ENCODE measurements at regions of chr12 and their contacts with region 1.

Region 1: GRCh38 chr12:121443193-121443870 is 43.4 kb downstream of the RNF34 start:
- DNase-seq: peak; percentile 62 to 80
- ATAC-seq: peak; percentile 82 to 93
- H3K4me3 ChIP-seq: no peak overlapping the region
- H3K27ac ChIP-seq: peak overlapping the region in 3 of 4 donors; percentile 14 to 29 (median 23)
- H3K4me1 ChIP-seq: peaks cover 0 to 5% of the 10 kb centered on the region in 2 donors
- H3K27me3 ChIP-seq: no peaks in the 10 kb centered on the region
- CTCF ChIP-seq: peak; percentile 85 to 97 (median 94)
- POLR2A ChIP-seq: no peak

Region 2: GRCh38 chr12:121209624-121210572 is 233.4 kb before region 1 on chr12 and contains the start of gene P2RX4:
- in situ Hi-C with region 1: no loop called
- intact Hi-C with region 1: no loop called
- DNase-seq: peak; percentile 38 to 63
- ATAC-seq: peak; percentile 67 to 75
- H3K4me3 ChIP-seq: peak within 1 kb of the TSS; percentile 60 to 74 (median 71)
- H3K27ac ChIP-seq: peak within 1 kb of the TSS; percentile 65 to 80 (median 74)
- H3K4me1 ChIP-seq: peaks cover 0 to 8% of the 10 kb centered on the region in 2 donors
- H3K27me3 ChIP-seq: no peaks in the 10 kb centered on the region
- CTCF ChIP-seq: no peak
- POLR2A ChIP-seq: peak; percentile 60 to 68
- total RNA-seq, gene P2RX4: 3.9 to 7.9 (median 6.1) TPM

Region 3: GRCh38 chr12:121334513-121335343 is 108.6 kb before region 1 on chr12:
- in situ Hi-C with region 1: loop called (anchors 5 to 10 kb)
- intact Hi-C with region 1: loop called (anchors 1 kb)
- DNase-seq: no peak
- ATAC-seq: peak; percentile 98 to 99
- H3K4me3 ChIP-seq: no peak overlapping the region
- H3K27ac ChIP-seq: no peak overlapping the region
- H3K4me1 ChIP-seq: no peaks in the 10 kb centered on the region
- H3K27me3 ChIP-seq: no peaks in the 10 kb centered on the region
- CTCF ChIP-seq: peak; percentile 77 to 92 (median 85)
- POLR2A ChIP-seq: no peak

Region 4: GRCh38 chr12:121663610-121663929 is 220.2 kb after region 1 on chr12:
- in situ Hi-C with region 1: no loop called
- intact Hi-C with region 1: no loop called
- DNase-seq: no peak
- ATAC-seq: no peak
- H3K4me3 ChIP-seq: no peak overlapping the region
- H3K27ac ChIP-seq: no peak overlapping the region
- H3K4me1 ChIP-seq: no peaks in the 10 kb centered on the region
- H3K27me3 ChIP-seq: no peaks in the 10 kb centered on the region
- CTCF ChIP-seq: no peak
- POLR2A ChIP-seq: no peak